Activated CD8-positive, alpha-beta memory T cell treated with anti-CD3 and anti-CD28 coated beads, Interleukin-2, amount 10 ng/mL, durations not matched to agents 7 days and 5 days (primary cell): ENCODE measurements at regions of chr1 and their contacts with region 1.

Region 1: DNA sequence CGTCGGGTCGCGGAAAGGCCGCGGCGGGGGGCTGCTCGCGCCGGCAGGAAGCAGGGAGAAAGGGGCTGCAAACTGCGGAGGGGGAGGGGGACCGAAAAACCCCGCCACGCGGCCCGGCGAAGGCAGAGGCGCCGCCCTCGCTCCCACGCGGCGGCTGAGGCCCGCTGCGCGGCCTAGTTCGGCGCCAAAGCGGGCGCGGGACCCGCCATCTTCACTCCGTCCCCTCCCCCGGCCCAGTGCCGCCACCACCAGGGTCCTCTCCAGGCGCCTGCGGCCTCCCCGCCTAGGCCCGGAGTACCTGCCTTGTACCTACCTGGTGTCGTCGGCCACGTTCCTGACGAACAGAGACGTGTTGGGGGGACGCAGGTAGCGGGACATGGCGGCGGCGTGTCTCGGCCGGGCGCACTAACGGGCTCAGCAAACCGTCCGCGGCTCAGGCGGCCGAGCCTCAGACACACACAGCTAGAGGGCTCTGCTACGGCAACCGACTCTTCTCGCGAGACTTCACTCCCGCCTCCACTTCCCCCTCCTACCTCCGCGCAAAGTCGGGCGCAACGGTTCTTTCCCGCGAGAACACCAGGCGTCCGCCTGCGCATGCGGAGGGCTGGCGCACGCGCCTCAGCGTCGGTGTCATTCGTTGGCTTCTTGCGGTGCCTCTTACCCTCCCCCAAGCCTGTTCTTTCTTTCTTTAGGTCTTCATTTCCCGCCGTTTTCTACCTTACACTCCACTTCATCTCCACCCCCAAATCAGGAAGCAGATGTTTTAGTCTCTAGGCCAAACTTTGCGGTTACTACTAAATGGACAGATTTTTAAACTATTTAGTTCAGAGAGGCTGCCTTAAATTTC is at the start of gene SRSF10:
- DNase-seq: peak; percentile 99
- ATAC-seq: peak; percentile 96
- H3K4me3 Mint-ChIP-seq: peak within 1 kb of the TSS; percentile 98
- H3K27ac Mint-ChIP-seq: peak within 1 kb of the TSS; percentile 94
- H3K4me1 Mint-ChIP-seq: peaks cover 37% of the 10 kb centered on the region
- H3K27me3 Mint-ChIP-seq: no peaks in the 10 kb centered on the region
- total RNA-seq, gene SRSF10: 221 to 226 TPM

Region 2: DNA sequence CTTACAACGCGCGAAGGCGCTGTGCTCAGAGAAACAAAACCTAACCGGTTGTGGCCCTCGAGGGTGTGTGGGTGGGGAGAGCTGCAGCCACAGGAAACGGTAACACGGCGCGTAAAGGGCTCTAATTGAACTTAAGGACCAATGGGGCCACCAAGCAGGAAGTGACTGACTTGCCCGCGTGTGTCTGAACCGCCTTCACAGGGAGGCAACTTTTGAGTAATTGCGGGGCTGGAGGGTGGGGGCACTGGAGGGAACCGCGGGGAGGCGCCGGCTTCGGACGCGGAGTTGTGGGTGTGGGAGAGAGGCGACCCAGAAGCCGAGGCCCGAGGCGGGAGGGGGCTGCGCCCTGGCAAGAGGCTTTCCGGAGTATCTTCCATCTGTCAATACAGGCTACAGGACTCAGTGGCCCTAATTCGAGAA is 21.1 kb before region 1 on chr1:
- CTCF ChIA-PET with region 1: interaction called, 24 read pairs
- DNase-seq: peak; percentile 97
- ATAC-seq: peak; percentile 76
- H3K4me3 Mint-ChIP-seq: peak overlapping the region; percentile 100
- H3K27ac Mint-ChIP-seq: peak overlapping the region; percentile 100
- H3K4me1 Mint-ChIP-seq: peaks cover 51% of the 10 kb centered on the region
- H3K27me3 Mint-ChIP-seq: no peaks in the 10 kb centered on the region

Region 3: DNA sequence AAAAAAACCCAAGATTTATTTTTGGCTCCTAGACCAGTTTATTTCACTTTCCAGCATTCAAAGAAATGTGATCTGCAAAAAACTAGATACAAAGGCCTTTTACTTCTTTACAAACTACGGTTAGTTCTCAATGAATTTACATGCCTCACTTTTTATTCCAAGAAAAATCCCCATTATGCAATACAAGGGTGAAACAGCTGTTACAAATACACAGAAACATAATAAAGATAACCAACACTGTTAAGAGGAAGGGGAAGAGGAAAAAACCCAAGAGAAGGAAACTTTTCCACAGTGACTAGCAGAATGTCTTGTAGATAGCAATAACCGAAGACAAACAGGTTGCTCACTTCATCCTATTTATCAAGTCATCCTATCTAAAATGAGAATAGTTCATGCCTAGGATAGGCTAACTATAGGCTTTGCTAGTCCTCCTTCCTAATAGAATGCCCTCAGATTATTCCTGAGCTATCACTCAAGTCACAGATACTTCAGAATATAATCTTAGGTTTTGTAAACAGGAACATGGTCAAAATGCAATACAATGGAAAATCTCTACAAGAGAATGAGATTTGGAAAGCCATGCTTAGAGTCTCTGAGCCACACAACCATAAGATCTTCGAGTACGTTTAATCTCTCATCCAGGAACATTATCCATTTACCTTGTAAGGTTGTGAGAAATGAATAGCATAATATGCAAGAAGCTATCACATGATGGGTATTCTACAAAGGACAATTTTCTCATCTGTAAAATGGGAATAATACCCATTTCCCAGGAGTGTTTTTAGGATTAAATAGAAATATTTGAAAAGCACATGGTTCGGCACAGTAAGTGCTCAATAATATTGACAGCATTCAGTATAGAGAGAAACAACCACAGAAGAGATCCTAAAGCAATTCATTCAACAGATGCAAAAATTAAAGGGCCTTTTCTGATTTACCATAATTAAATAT is 15.0 kb before region 1 on chr1:
- CTCF ChIA-PET with region 1: interaction called, 24 read pairs
- DNase-seq: no peak
- ATAC-seq: peak; percentile 11
- H3K4me3 Mint-ChIP-seq: no peak overlapping the region
- H3K27ac Mint-ChIP-seq: peak overlapping the region; percentile 84
- H3K4me1 Mint-ChIP-seq: peaks cover 65% of the 10 kb centered on the region
- H3K27me3 Mint-ChIP-seq: no peaks in the 10 kb centered on the region